ENCODE measurements at regions of chr7 and their contacts with region 1.

Region 1: GRCh38 chr7:55255496-55256435 is 109.4 kb upstream of the LANCL2 start:
- DNase-seq: peak; percentile 69 to 97 (median 84)

Region 2: GRCh38 chr7:54773472-54774399 is 482.0 kb before region 1 on chr7:
- intact Hi-C with region 1: loop called (anchors 1 kb)
- DNase-seq: peak; percentile 68 to 97 (median 86)

Region 3: GRCh38 chr7:54788664-54789063 is 467.1 kb before region 1 on chr7:
- intact Hi-C with region 1: loop called (anchors 1 kb)
- DNase-seq: peak in 3 of 10 donors; percentile 14 to 28 (median 21)

Region 4: GRCh38 chr7:55050281-55050680 is 205.5 kb before region 1 on chr7:
- intact Hi-C with region 1: loop called (anchors 2 kb)
- DNase-seq: no peak

Region 5: DNA sequence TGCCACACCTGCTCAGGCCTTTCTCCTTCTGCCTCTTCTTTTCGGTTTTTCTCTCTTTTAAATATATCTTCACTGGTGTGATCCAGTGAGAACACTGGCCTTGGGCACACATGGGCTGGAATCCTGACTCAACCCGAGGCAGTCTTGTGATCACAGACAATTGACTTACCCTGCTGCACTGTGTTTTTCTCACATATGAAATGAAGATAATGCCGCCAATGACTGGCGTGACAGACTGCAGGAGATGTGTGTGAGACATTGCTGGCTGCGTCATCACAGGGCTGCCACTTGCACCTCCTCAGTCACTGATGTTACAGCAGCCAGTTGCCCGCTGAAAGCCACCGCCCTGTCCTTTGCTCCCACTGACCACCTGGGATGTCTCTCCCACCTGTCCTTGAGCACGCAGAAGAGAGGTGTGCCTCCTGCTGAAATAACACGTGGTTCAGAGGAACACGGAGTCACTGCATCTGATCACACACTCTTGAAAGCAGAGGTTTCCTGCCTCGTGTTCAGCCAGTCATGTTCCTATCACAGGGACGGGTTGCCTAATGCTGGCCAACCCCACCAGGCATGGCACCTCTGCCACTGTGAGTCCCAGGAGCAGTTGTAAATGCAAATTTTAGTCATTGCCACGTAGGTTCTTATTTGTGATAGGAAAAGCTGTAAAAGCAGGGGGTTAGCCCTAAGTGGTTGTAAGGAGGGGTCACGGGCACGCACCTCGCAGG is 15.2 kb before region 1 on chr7:
- intact Hi-C with region 1: no loop called
- DNase-seq: no peak

Region 6: DNA sequence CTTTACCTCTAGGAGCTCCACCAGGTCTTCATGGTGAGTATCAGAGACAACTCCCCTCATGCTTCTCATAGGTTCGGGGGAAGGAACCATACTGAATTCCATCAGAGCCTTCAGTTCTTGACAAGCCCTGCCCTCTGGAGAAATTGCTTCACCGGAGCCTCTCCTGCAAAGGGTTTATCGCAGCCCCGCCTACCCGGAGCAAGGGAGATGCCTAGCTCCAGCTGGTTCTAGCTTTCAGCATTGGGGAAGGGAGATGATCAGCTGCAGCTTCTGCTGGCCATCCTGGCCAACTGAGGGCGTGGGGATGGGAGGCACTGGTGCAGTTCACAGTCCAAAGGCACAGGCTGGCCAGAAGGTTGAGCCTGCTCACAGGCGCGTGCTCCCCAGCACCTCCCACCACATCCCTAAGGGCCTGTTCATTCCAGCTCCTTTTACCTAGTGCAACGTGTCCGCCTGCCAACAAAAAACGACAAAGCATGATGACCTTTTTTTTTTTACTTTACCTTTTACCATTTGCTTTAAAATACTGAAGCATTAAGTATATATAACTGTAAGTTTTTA is 140.5 kb after region 1 on chr7:
- intact Hi-C with region 1: no loop called
- DNase-seq: no peak